ENCODE measurements at regions of chr5 and their contacts with region 1.

Region 1: DNA sequence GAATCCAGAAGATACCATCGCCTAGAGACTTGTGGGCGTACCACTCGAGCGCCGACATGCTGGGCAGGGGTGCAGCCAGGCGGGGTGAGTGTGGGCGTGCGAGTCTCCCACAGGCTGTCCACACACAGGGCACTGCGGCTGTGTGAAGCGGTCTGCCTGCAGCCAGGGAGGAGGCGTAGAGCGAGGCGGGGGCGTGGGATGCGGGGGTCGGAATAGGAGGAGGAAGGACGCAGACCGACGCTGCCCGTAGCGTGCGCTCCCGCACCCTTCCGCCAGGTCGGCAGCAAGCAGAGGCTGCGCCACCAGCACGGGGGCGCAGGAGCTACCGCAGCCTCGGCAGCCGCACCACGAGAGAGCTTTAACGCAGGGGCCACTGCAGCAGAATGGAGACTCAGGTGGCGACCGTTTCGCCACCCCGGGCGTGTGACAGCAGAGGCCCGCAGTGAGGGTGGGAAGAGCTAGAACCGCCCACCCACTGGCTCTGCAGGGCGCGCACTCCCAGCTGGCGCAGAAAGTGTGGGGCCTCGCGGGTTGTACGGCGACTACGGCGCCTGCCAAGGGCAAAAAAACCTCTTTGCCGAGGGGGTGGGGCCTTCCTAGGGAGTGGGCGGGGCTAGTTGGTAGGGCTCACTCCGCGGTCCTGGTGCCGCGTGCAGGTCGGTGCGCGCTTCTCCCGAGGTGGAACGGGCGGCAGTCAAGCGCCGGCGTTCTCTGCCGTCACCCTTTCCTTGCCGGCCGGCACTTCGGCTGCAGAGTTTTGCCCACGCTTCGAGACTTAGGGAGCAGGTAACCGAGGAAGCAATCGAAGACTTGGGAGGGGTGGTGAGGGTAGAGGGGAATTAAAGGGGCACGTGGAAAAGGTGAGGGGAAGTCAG is at the starts of genes MBLAC2 and POLR3G:
- DNase-seq: peak; percentile 86
- ATAC-seq: peak; percentile 91
- H3K4me3 Mint-ChIP-seq: peak within 1 kb of the TSS; percentile 98
- H3K27ac Mint-ChIP-seq: peak within 1 kb of the TSS; percentile 93
- H3K4me1 Mint-ChIP-seq: peaks cover 27% of the 10 kb centered on the region
- H3K27me3 Mint-ChIP-seq: no peaks in the 10 kb centered on the region
- CTCF ChIP-seq: no peak
- total RNA-seq, gene MBLAC2: 6.4 and 7.3 TPM in 2 replicates
- total RNA-seq, gene POLR3G: 2.9 and 3.1 TPM in 2 replicates

Region 2: DNA sequence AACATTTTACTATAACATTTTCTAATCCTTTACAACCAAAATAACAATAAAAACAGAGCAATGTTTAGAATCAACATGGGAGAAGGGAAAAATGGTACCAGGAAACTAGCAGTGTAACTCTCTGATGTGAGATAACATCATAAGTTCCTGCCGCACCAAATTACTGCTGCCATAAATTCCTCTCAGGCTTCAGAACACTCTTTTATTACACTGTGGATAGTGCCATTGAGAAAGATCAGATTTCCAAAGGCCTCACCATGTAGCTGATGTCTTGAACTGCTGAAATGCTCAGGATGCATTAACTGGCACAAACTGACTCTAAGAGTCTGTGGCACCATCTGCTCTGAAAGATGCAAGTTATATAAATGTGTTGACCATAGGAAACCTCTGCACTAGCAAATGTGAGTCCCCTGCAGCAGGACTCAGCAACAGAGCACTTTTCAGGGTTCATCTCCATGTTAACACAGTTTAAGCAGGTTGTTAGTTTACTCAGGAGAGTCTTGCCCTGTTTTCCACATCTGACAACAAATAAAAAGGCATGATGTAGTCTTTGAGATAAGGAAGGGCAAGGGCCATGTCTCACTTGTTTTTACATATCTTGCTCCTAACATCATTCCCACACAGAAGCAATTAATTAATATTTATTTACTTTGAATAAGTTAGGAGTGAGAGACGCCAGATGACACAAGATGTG is 283.0 kb before region 1 on chr5:
- CTCF ChIA-PET with region 1: no interaction called
- POLR2A ChIA-PET with region 1: no interaction called
- intact Hi-C with region 1: no loop called
- DNase-seq: no peak
- ATAC-seq: no peak
- H3K4me3 Mint-ChIP-seq: no peak overlapping the region
- H3K27ac Mint-ChIP-seq: no peak overlapping the region
- H3K4me1 Mint-ChIP-seq: no peaks in the 10 kb centered on the region
- H3K27me3 Mint-ChIP-seq: peaks cover 11% of the 10 kb centered on the region
- CTCF ChIP-seq: no peak

Region 3: DNA sequence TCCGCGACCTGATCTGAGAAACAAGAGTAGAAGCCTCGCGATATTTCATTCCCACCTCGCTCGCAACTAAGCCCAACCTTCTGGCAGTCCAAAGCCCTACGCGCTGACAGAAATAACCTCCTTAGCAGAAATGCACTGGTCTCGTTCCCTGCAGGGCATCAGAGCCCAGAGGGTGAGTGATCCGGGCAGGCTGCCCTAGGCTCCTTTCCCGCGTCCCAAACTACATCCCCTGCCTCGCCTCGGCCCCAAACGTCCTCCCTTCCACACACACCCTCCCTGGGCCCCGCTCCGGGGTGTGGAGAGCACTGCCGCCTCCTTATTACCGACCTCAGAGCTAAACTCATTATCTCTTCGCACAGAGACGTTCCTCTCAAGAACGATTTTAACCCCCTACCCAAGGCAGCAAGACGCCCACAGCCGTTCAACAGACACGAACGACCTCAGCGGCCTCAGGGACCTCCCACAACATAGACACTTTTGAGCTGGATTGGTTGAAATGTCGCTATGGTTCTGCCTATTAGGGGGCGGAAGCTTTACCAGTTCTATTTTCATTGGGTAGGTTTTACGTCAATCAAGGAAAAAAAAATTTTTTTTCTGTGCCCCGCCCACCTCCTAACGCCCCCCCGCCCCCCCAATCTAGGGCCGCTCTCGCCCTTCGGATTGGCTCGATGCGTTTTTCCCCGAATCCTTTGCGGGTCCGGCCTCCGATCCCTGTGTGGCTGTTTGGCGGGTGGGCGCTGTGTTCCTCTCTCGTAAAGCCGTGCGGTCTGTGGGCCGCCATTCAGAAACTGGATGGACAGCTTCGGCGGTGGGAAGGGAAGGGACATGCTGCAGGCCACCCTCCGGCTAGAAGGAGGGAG is 64.9 kb before region 1 on chr5 and contains the start of gene CETN3:
- CTCF ChIA-PET with region 1: interaction called, 3 read pairs
- POLR2A ChIA-PET with region 1: interaction called, 48 read pairs
- intact Hi-C with region 1: loop called (anchors 1 kb)
- DNase-seq: peak; percentile 79
- ATAC-seq: peak; percentile 93
- H3K4me3 Mint-ChIP-seq: no peak within 1 kb of the TSS
- H3K27ac Mint-ChIP-seq: no peak within 1 kb of the TSS
- H3K4me1 Mint-ChIP-seq: peaks cover 11% of the 10 kb centered on the region
- H3K27me3 Mint-ChIP-seq: no peaks in the 10 kb centered on the region
- CTCF ChIP-seq: no peak
- total RNA-seq, gene CETN3: 19.1 and 20.3 TPM in 2 replicates

Region 4: GRCh38 chr5:91027405-91028139 is 553.1 kb after region 1 on chr5:
- CTCF ChIA-PET with region 1: no interaction called
- POLR2A ChIA-PET with region 1: no interaction called
- intact Hi-C with region 1: no loop called
- DNase-seq: no peak
- ATAC-seq: no peak
- H3K4me3 Mint-ChIP-seq: no peak overlapping the region
- H3K27ac Mint-ChIP-seq: no peak overlapping the region
- H3K4me1 Mint-ChIP-seq: no peaks in the 10 kb centered on the region
- H3K27me3 Mint-ChIP-seq: peaks cover 3% of the 10 kb centered on the region
- CTCF ChIP-seq: no peak

Region 5: DNA sequence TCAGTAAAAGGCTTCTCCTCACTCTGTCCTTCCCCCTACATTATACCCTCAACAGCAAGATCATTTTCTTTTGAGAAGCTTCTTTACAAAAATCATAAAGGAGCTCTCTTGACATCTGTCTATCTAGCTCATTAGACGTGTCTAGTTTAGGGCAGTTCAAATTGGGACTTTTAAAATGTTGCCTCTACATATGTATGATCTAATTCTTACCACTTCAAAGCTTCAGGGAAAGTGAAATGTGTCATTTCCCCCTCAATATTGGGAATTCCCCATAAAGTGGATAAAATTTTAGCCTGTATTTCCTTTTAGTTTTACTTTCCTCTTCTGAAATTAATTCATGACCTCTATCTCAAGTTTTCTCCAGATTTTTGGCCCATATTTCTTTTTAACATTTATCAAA is 584.9 kb after region 1 on chr5:
- CTCF ChIA-PET with region 1: no interaction called
- POLR2A ChIA-PET with region 1: no interaction called
- intact Hi-C with region 1: no loop called
- DNase-seq: no peak
- ATAC-seq: no peak
- H3K4me3 Mint-ChIP-seq: no peak overlapping the region
- H3K27ac Mint-ChIP-seq: no peak overlapping the region
- H3K4me1 Mint-ChIP-seq: peaks cover 2% of the 10 kb centered on the region
- H3K27me3 Mint-ChIP-seq: peaks cover 4% of the 10 kb centered on the region
- CTCF ChIP-seq: no peak

Region 6: DNA sequence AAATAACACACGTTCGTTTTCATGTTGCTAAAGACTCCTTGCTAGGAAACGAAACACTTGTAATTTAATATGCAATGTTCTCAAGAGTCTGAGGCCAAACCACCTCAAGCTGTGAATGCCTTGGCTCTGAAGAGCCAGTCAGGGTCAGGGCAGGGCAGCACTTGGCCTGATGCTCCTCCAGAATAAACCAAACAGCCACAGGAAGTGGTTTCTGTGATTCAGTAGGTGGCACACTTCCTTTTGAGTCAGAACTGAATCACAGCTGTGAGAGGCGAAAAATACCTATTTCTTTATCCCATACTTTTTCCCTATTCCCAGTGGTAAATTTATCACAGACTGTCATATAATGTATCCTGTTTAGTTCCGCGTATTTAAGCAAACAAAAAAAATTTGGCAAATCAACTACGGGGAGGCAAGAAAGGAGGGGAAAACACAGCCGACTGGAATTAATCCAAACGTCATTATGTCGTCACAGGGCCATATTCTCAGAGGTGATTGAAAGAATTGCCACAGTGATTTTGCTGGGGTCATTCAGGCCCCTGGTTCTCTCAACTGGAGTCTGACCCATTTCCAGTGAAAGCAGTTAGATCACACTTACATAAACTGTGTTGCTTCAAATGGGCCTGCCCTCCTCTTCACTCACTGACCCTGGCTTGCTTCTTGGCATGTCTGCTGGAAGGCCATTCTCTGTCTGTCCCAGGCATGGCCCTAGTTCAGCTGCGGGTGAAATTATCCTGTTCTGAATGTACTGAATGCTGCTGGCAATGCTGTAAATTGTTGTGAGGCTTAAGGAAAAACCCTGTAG is 837.4 kb after region 1 on chr5:
- CTCF ChIA-PET with region 1: no interaction called
- POLR2A ChIA-PET with region 1: no interaction called
- intact Hi-C with region 1: loop called (anchors 5 kb)
- DNase-seq: no peak
- ATAC-seq: peak; percentile 84
- H3K4me3 Mint-ChIP-seq: peak overlapping the region; percentile 70
- H3K27ac Mint-ChIP-seq: peak overlapping the region; percentile 88
- H3K4me1 Mint-ChIP-seq: peaks cover 53% of the 10 kb centered on the region
- H3K27me3 Mint-ChIP-seq: no peaks in the 10 kb centered on the region
- CTCF ChIP-seq: no peak